Posterior vena cava (tissue), 2 donors: ENCODE measurements at regions of chr16 and their contacts with region 1.

Region 1: GRCh38 chr16:2673066-2673999 is 9.0 kb upstream of the KCTD5 start:
- DNase-seq: peak; percentile 99

Region 2: DNA sequence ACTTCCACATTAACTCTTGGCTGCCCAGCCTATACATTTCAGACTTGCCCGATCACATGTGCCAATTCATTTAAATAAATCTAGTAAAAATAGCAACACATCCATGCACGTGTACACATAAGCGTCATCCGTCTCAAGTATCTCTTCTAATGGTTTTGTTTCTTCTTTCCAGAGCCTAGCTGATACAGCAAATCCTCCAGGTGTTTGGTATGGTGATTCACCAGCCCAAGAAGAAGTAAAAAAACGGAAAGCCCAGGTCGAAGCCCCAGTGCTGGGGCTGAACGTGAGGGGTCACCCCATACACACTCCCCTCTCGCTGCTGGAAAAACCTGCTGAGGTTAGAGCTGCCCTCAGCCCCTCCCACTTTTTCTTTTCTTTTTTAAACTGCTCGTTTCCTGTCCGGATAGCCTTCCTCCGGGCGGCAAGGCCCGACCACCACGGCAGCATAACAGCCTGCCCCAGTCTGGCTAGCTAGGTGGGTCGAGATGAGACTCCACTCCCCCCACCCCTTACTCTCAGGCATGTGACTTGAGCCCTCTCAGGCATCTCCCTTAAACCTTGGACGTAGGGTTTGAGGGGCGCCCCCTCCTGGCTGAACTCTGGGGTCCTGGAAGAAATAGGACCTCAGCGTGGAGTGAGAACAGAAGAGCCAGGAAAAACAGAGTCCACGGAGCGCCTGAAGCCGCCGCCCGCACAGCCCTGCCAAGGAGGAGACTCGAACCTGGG is 500.7 kb after region 1 on chr16:
- intact Hi-C with region 1: loop called in 1 of 2 experiments (anchors 5 kb)
- DNase-seq: peak; percentile 71

Region 3: GRCh38 chr16:3880623-3881498 is 1207.5 kb after region 1 on chr16 and contains the start of gene CREBBP:
- intact Hi-C with region 1: no loop called
- DNase-seq: peak; percentile 95
- total RNA-seq, gene CREBBP: 48.4 to 56.8 TPM